ENCODE measurements at regions of chr17 and their contacts with region 1.

Region 1: DNA sequence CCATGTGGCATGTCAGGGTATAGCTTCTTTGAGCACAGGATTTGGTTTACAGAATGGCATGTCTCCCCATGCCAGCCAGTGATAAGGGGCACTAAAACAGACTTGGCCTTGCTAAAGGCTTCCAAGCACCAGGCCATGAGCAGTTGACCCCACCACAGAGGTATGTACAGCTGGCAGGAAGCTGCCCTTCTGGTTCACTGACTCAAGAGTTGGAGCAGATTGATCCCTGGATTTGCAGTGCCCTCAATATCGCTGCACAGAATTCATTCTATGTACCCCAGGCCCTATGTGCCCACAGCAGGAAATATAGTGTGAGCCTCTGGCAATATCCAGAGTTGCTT is 24.3 kb downstream of the HLF start:
- DNase-seq: no peak
- H3K4me3 ChIP-seq: no peak overlapping the region
- H3K27ac ChIP-seq: no peak overlapping the region
- H3K4me1 ChIP-seq: peaks cover 0 to 5% (median 0%) of the 10 kb centered on the region in 4 experiments; a peak in 1 of 7 replicates
- H3K27me3 ChIP-seq: no peaks in the 10 kb centered on the region
- CTCF ChIP-seq: no peak
- EP300 ChIP-seq: no peak
- POLR2A ChIP-seq: no peak
- RAD21 ChIP-seq: no peak

Region 2: DNA sequence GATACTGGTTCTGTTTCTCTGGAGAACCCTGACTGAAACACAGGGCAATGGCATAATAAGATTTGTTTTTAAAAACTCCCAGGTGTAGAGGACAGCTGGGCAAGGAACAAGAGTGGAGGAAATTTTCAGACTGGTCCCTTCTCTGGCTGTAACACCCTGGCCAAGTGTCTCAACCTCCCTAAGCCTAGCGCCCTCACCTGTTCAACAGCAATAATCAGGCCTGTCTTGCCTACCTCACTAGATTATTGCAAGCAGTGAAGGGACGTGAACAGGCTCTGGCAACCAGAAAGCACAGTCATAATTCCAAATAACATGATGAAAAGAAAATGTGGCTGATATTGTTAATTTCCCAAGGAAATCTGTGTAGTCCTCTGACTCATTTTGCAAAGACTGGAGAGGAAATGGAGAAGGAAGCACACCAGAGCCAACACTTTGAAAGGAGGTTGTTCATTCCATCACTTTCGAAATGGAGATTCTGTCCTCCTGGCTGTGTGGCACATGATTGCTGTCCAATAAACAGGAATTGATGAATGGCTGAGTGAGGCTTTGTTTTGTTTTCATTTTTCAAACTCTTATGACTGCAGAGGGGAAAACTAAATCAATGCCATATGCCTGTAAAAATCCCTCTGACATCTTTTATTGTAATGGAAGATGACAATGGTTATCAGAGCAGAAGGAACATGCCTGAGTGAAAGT is 111.8 kb before region 1 on chr17:
- CTCF ChIA-PET with region 1: no interaction called
- POLR2A ChIA-PET with region 1: no interaction called
- DNase-seq: no peak
- H3K4me3 ChIP-seq: no peak overlapping the region
- H3K27ac ChIP-seq: no peak overlapping the region
- H3K4me1 ChIP-seq: no peaks in the 10 kb centered on the region; a peak in 1 of 7 replicates
- H3K27me3 ChIP-seq: no peaks in the 10 kb centered on the region
- CTCF ChIP-seq: peak; percentile 54 to 65 (median 55)
- EP300 ChIP-seq: no peak
- POLR2A ChIP-seq: no peak
- RAD21 ChIP-seq: peak; percentile 50 to 64

Region 3: GRCh38 chr17:55303701-55304145 is 14.6 kb after region 1 on chr17:
- CTCF ChIA-PET with region 1: interaction called, 10 read pairs
- POLR2A ChIA-PET with region 1: no interaction called
- DNase-seq: no peak
- H3K4me3 ChIP-seq: no peak overlapping the region
- H3K27ac ChIP-seq: no peak overlapping the region
- H3K4me1 ChIP-seq: peaks cover 0 to 4% (median 2%) of the 10 kb centered on the region in 4 experiments; a peak in 2 of 7 replicates
- H3K27me3 ChIP-seq: no peaks in the 10 kb centered on the region
- CTCF ChIP-seq: no peak
- EP300 ChIP-seq: no peak
- POLR2A ChIP-seq: no peak
- RAD21 ChIP-seq: no peak